ENCODE measurements at regions of chr5 and their contacts with region 1.

Region 1: DNA sequence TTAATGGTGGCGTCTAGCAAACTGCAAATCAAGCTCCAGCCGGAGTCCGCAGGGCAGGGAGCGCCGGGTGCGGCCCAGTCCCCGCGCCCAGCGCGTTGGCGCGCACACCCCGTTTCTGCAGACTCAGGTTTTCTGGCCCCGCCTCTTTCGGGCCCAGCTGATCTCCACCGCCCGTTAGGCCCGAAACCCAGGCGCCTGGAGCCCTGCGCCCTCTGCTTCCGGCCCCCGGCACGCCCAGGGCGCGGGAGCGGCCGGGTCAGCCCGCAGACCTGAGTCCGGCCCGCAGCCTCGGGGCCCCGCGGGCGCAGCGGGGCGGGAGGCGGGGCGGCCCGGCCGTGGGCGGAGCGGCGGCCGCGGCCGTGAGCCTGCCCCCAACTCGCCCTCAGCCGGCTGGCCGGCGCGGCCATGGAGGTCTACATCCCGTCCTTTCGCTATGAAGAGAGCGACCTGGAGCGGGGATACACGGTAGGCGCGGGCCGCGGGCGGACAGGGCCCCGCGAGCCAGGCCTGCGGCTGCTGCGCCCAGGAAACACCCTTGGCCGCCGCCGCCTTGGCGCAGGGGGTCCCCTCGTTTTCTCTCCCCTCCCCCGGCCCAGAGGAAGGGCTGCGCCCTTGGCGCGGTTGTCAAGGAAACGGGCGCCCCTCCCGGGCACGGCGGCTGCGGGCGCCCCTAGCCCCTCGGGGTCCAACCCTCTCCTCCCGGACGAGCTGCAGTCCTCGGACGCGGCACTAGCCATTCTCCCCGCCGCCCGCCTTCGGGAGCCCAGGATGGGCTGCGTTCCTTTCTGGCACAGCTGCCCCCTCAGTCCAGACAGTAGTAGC is at the start of gene SNX24:
- DNase-seq: peak; percentile 85
- H3K4me3 Mint-ChIP-seq: peak within 1 kb of the TSS; percentile 85
- H3K27ac Mint-ChIP-seq: peak within 1 kb of the TSS; percentile 91
- H3K4me1 Mint-ChIP-seq: peaks cover 40% of the 10 kb centered on the region
- H3K27me3 Mint-ChIP-seq: no peaks in the 10 kb centered on the region
- CTCF ChIP-seq: no peak
- total RNA-seq, gene SNX24: 97.0 and 98.1 TPM in 2 replicates

Region 2: DNA sequence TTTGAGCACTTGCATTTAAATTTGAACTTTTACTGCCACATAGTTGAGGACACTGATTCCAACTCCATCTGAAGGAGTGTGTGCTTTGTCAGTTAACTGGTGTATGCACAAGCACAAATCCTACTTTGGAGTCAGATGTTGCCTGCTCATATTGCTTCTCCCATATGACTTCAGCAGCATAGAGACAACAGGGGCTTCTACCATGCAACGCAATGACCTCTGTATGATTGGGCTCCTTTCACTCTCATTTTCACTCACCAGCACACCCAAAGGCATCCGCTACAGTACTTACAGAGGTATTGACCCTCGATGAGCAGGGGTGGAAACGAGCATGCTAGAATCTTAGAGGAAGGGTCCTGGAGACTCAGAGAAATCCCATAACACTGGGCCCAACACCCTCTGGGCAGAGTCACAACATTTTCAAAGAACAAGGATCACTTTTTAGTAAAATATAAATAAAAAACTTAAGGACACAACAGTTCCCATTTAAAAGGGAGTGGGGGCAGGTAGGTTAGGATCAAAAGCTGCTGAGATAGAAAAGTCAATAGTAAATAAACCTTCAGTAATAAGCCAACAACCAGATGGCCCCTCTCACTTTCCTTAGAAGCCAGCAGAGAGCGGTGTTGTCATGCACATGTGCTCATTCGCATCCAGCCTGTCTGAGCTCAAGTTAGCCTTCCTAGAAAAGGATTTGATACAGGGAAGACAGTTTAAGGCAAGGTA is 329.6 kb before region 1 on chr5:
- CTCF ChIA-PET with region 1: interaction called, 7 read pairs
- POLR2A ChIA-PET with region 1: interaction called, 3 read pairs
- intact Hi-C with region 1: loop called (anchors 10 kb)
- DNase-seq: peak; percentile 89
- H3K4me3 Mint-ChIP-seq: no peak overlapping the region
- H3K27ac Mint-ChIP-seq: no peak overlapping the region
- H3K4me1 Mint-ChIP-seq: no peaks in the 10 kb centered on the region
- H3K27me3 Mint-ChIP-seq: no peaks in the 10 kb centered on the region
- CTCF ChIP-seq: peak; percentile 94

Region 3: GRCh38 chr5:122831984-122832383 is 13.5 kb before region 1 on chr5:
- CTCF ChIA-PET with region 1: interaction called, 3 read pairs
- POLR2A ChIA-PET with region 1: interaction called, 35 read pairs
- intact Hi-C with region 1: no loop called
- DNase-seq: no peak
- H3K4me3 Mint-ChIP-seq: no peak overlapping the region
- H3K27ac Mint-ChIP-seq: no peak overlapping the region
- H3K4me1 Mint-ChIP-seq: no peaks in the 10 kb centered on the region
- H3K27me3 Mint-ChIP-seq: no peaks in the 10 kb centered on the region
- CTCF ChIP-seq: no peak

Region 4: GRCh38 chr5:122882837-122883236 is 37.4 kb after region 1 on chr5:
- CTCF ChIA-PET with region 1: no interaction called
- POLR2A ChIA-PET with region 1: interaction called, 13 read pairs
- intact Hi-C with region 1: loop called (anchors 5 kb)
- DNase-seq: peak; percentile 39
- H3K4me3 Mint-ChIP-seq: peak overlapping the region; percentile 2
- H3K27ac Mint-ChIP-seq: peak overlapping the region; percentile 8
- H3K4me1 Mint-ChIP-seq: peaks cover 24% of the 10 kb centered on the region
- H3K27me3 Mint-ChIP-seq: no peaks in the 10 kb centered on the region
- CTCF ChIP-seq: no peak

Region 5: GRCh38 chr5:123036391-123037103 is 191.1 kb after region 1 on chr5 and contains the start of gene PPIC:
- CTCF ChIA-PET with region 1: interaction called, 4 read pairs
- POLR2A ChIA-PET with region 1: interaction called, 7 read pairs
- intact Hi-C with region 1: loop called (anchors 1 kb)
- DNase-seq: peak; percentile 88
- H3K4me3 Mint-ChIP-seq: peak within 1 kb of the TSS; percentile 80
- H3K27ac Mint-ChIP-seq: peak within 1 kb of the TSS; percentile 86
- H3K4me1 Mint-ChIP-seq: peaks cover 38% of the 10 kb centered on the region
- H3K27me3 Mint-ChIP-seq: no peaks in the 10 kb centered on the region
- CTCF ChIP-seq: no peak
- total RNA-seq, gene PPIC: 45.3 and 65.0 TPM in 2 replicates

Measured in MCF 10A (cell line).